ENCODE measurements at regions of chr7 and their contacts with region 1.

Region 1: GRCh38 chr7:106041140-106041717 is 70.9 kb downstream of the SYPL1 start:
- DNase-seq: peak; percentile 80
- H3K4me3 ChIP-seq: no peak overlapping the region; a peak in 1 of 4 replicates
- H3K27ac ChIP-seq: no peak overlapping the region
- H3K4me1 ChIP-seq: peaks cover 4 to 28% of the 10 kb centered on the region in 2 experiments; a peak in 2 of 4 replicates
- H3K27me3 ChIP-seq: no peaks in the 10 kb centered on the region
- CTCF ChIP-seq: peak; percentile 89
- EP300 ChIP-seq: 0 out of 4 replicates have a peak, but pooled peaks of 1 of the 2 experiments have one; percentile 18
- RAD21 ChIP-seq: peak; percentile 60

Region 2: DNA sequence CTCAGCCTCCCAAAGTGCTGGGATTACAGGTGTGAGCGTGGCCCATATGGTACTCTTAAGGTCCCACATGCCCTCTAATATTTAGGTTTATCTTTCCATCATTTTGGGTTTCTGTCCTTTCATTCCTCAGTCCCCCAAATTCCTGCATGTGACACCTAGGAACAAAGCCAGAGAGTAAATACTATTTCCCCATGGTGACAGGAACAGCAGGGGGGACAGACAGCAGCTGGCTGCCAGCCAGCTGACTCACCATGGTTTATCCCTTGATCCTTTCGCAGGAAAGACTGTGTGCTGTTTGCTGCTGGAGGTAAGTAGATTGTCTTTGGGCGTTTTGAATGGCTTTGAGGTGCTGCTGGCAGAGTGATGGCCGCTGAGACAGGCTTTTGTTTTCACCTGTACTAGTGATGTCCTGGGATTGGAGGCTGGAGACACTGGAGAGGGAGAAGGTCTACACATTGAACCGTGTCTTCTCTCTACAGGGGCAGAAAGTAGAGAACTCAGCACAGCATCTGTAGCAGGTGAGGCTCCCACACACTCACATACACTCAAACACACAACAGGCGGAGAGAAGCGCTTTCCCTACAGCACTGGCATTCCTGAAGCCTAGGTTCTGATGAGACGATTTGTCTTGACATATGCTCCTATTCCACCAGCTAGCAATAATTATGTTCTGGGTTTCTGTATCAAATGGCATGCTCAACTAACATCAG is 376.3 kb before region 1 on chr7:
- CTCF ChIA-PET with region 1: interaction called, 10 read pairs
- POLR2A ChIA-PET with region 1: no interaction called
- DNase-seq: peak; percentile 60
- H3K4me3 ChIP-seq: no peak overlapping the region
- H3K27ac ChIP-seq: no peak overlapping the region
- H3K4me1 ChIP-seq: peaks cover 5 to 9% of the 10 kb centered on the region in 2 experiments; a peak in 2 of 4 replicates
- H3K27me3 ChIP-seq: no peaks in the 10 kb centered on the region
- CTCF ChIP-seq: no peak
- EP300 ChIP-seq: no peak
- RAD21 ChIP-seq: no peak

Region 3: DNA sequence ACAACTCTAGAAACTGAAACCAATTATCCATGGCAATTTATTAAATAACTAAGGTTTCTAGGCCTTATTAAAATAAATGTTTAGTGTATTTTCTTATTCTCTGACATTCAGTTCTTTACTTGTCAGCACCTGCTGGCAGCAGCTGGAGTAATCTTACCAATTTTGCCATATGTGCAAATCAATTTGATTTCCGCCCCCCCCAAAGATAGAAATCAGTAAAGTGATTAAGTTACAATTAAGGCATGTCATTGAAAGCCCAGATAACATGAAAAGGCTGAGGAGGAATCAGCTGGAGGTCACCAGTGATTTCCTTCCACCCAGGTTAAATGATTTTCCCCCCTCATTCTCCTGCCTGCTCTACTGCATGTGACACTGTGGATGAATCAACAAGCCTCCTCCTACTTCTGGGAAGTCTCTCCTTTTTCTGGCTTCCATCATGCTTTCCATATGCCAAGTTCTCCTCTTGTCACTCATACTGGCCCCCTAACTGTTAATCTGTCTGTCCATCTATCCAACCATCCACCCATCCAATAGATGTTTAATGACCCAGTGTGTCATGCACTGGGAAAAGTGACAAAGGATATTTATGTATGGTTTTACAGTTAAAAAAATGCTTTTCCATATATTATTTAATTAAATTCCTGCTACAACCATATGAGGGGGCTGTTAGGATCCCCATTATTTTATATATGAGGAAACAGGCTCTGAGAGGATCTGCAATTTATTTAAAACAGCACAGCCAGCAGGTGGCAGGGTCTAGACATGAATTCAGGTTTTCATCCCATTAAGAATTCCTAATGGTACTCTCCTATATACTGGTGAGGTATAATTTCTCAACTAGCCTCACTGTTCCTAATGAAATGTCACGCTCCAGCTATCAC is 281.3 kb before region 1 on chr7:
- CTCF ChIA-PET with region 1: interaction called, 356 read pairs
- POLR2A ChIA-PET with region 1: no interaction called
- DNase-seq: peak; percentile 53
- H3K4me3 ChIP-seq: no peak overlapping the region
- H3K27ac ChIP-seq: peak overlapping the region; percentile 20 to 44
- H3K4me1 ChIP-seq: peaks cover 16 to 20% of the 10 kb centered on the region in 2 experiments
- H3K27me3 ChIP-seq: no peaks in the 10 kb centered on the region
- CTCF ChIP-seq: peak; percentile 97
- EP300 ChIP-seq: peak in 1 of 2 experiments; percentile 53; a peak in 2 of 4 replicates
- RAD21 ChIP-seq: peak; percentile 96

Region 4: GRCh38 chr7:105934572-105935185 is 106.5 kb before region 1 on chr7:
- CTCF ChIA-PET with region 1: interaction called, 188 read pairs
- POLR2A ChIA-PET with region 1: interaction called, 3 read pairs
- DNase-seq: peak; percentile 65
- H3K4me3 ChIP-seq: no peak overlapping the region
- H3K27ac ChIP-seq: no peak overlapping the region
- H3K4me1 ChIP-seq: peaks cover 20 to 21% of the 10 kb centered on the region in 2 experiments
- H3K27me3 ChIP-seq: no peaks in the 10 kb centered on the region
- CTCF ChIP-seq: peak; percentile 58
- EP300 ChIP-seq: no peak
- RAD21 ChIP-seq: peak; percentile 93

Region 5: DNA sequence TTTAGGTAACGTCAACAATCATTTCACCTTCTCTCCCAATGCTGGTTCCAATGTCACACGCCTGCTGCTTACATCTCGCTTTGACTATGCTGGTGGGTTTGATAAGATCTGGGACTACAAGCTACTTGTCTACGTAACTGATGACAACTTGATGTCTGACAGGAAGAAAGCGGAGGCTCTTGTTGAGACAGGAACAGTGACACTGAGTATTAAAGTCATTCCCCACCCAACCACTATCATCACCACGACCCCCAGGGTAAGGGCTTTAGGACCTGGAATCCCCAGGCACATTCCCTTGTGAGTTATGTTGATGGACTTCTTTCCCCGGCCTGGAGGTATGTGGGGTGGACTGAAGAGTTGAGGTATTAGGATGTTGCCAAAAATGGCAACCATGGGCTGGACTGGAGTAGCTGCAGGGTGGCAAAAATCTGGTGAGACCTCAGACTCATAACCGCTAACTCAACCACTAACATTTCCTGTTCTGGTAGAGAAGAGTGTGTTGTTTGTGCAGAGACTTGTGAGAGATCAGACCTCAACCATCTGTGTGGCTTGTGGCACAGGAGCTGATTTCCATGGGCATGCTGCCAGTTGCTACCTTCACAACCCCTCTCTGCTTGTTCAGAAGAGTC is 18.9 kb before region 1 on chr7:
- CTCF ChIA-PET with region 1: interaction called, 114 read pairs
- POLR2A ChIA-PET with region 1: no interaction called
- DNase-seq: no peak
- H3K4me3 ChIP-seq: no peak overlapping the region
- H3K27ac ChIP-seq: no peak overlapping the region
- H3K4me1 ChIP-seq: peaks cover 13 to 18% of the 10 kb centered on the region in 2 experiments; a peak in 1 of 4 replicates
- H3K27me3 ChIP-seq: no peaks in the 10 kb centered on the region
- CTCF ChIP-seq: no peak
- EP300 ChIP-seq: no peak
- RAD21 ChIP-seq: no peak

Region 6: GRCh38 chr7:106166655-106167342 is 125.6 kb after region 1 on chr7:
- CTCF ChIA-PET with region 1: interaction called, 97 read pairs
- POLR2A ChIA-PET with region 1: no interaction called
- DNase-seq: peak; percentile 73
- H3K4me3 ChIP-seq: no peak overlapping the region; a peak in 1 of 4 replicates
- H3K27ac ChIP-seq: no peak overlapping the region
- H3K4me1 ChIP-seq: no peaks in the 10 kb centered on the region; a peak in 1 of 4 replicates
- H3K27me3 ChIP-seq: no peaks in the 10 kb centered on the region
- CTCF ChIP-seq: peak; percentile 95
- EP300 ChIP-seq: no peak
- RAD21 ChIP-seq: peak; percentile 92

Region 7: GRCh38 chr7:106346678-106347217 is 305.5 kb after region 1 on chr7:
- CTCF ChIA-PET with region 1: no interaction called
- POLR2A ChIA-PET with region 1: no interaction called
- DNase-seq: no peak
- H3K4me3 ChIP-seq: no peak overlapping the region
- H3K27ac ChIP-seq: peak overlapping the region in 1 of 2 experiments; percentile 40; a peak in 2 of 4 replicates
- H3K4me1 ChIP-seq: peaks cover 0 to 19% of the 10 kb centered on the region in 2 experiments; a peak in 2 of 4 replicates
- H3K27me3 ChIP-seq: no peaks in the 10 kb centered on the region
- CTCF ChIP-seq: no peak
- EP300 ChIP-seq: peak; percentile 40 to 86; a peak in 1 of 4 replicates
- RAD21 ChIP-seq: no peak

Region 8: DNA sequence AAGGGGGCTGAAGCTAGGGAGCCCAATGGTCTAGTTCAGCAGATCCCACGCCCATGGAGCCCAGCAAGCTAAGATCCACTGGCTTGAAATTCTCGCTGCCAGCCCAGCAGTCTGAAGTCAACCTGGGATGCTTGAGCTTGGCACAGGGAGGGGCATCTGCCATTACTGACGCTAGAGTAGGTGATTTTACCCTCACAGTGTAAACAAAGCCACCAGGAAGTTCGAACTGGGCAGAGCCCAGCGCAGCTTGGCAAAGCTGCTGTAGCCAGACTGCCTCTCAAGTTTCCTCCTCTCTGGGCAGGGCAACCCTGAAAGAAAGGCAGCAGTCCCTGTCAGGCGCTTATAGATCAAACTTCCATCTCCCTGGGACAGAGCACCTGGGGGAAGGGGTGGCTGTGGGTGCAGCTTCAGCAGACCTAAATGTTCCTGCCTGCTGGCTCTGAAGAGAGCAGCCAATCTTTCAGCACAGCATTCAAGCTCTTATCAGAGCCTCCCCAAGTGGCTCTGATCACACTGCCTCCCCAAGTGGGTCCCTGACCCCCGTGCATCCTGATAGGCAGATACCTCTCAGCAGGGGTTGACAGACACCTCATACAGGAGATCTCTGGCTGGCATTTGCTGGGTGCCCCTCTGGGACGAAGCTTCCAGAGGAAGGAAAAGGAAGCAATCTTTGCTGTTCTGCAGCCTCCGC is 452.0 kb after region 1 on chr7:
- CTCF ChIA-PET with region 1: no interaction called
- POLR2A ChIA-PET with region 1: no interaction called
- DNase-seq: no peak
- H3K4me3 ChIP-seq: no peak overlapping the region
- H3K27ac ChIP-seq: no peak overlapping the region
- H3K4me1 ChIP-seq: no peaks in the 10 kb centered on the region
- H3K27me3 ChIP-seq: no peaks in the 10 kb centered on the region
- CTCF ChIP-seq: no peak
- EP300 ChIP-seq: no peak
- RAD21 ChIP-seq: no peak

Measured in SK-N-SH (cell line).